Activated naive CD4-positive, alpha-beta T cell treated with anti-CD3 and anti-CD28 coated beads for 36 hours (primary cell): ENCODE measurements at regions of chr15 and their contacts with region 1.

Region 1: DNA sequence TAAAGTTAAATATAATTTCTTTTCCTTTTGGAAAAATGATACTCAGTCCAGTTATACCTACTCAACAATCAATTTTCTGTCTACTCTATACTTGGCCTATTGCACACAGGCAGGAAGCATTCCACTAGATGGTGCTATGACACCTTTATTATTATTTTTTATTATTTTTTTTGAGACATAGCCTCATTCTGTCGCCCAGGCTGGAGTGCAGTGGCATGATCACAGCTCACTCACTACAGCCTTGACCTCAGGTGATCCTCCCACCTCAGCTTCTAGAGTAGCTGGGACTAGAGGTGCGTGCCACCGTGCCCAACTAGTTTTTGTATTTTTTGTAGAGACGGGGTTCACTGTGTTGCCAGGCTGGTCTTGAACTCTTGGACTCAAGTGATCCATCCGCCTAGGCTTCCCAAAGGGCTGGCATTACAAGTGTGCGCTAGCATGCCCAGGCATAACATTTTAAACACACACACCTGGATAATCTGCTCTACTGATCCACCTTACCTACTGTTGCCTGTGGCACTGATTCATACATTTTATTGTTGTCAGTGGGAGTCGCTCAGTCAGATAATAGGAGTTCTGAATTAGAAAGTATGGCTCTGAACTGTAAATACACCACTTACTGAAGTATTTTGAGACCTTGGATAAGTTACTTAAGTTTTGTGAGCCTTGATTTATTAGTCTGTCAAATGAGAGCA is 56.2 kb downstream of the EIF3J start:
- DNase-seq: peak; percentile 31
- H3K4me3 Mint-ChIP-seq: no peak overlapping the region
- H3K27ac Mint-ChIP-seq: no peak overlapping the region
- H3K4me1 Mint-ChIP-seq: peaks cover 22% of the 10 kb centered on the region
- H3K27me3 Mint-ChIP-seq: no peaks in the 10 kb centered on the region

Region 2: DNA sequence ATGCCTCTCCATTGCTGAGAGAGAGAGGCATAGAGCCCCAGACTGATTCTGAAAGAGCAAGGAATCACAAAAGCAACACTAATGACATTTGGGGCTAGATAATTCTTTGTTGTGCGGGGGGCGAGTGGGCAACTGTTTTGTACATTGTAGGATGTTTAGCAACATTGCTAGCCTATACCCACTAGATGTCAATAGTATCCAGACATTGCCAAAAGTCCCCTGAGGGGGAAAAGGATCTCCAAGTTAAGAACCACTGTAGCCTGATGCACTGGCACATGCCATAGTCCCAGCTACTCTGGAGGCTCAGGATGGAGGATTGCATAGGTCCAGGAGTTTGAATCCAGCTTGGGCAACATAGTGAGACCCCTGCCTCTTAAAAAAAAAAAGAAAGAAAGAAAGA is 327.4 kb before region 1 on chr15:
- CTCF ChIA-PET with region 1: no interaction called
- intact Hi-C with region 1: no loop called
- DNase-seq: no peak
- H3K4me3 Mint-ChIP-seq: no peak overlapping the region
- H3K27ac Mint-ChIP-seq: no peak overlapping the region
- H3K4me1 Mint-ChIP-seq: no peaks in the 10 kb centered on the region
- H3K27me3 Mint-ChIP-seq: no peaks in the 10 kb centered on the region

Region 3: GRCh38 chr15:44468713-44469385 is 124.3 kb before region 1 on chr15:
- CTCF ChIA-PET with region 1: no interaction called
- intact Hi-C with region 1: no loop called
- DNase-seq: no peak
- H3K4me3 Mint-ChIP-seq: no peak overlapping the region
- H3K27ac Mint-ChIP-seq: peak overlapping the region; percentile 65
- H3K4me1 Mint-ChIP-seq: peaks cover 25% of the 10 kb centered on the region
- H3K27me3 Mint-ChIP-seq: no peaks in the 10 kb centered on the region

Region 4: DNA sequence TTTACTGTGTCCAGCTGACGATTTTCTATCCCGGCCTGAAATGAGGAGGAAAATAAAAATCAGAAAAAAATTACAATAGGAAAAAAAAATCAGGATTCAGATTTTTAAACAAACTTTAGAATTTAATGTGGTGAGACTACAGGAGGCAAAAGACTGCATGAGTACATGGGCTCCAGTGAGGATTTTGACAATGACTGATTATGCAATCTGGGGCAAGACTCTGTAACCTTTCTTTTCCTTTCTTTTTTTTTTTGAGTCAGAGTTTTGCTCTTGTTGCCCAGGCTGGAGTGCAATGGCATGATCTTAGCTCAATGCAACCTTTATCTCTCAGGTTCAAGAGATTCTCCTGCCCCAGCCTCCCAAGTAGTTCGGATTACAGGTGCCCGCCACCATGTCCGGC is 40.4 kb after region 1 on chr15:
- CTCF ChIA-PET with region 1: interaction called, 6 read pairs
- intact Hi-C with region 1: loop called (anchors 1 kb)
- DNase-seq: peak; percentile 34
- H3K4me3 Mint-ChIP-seq: peak overlapping the region; percentile 65
- H3K27ac Mint-ChIP-seq: peak overlapping the region; percentile 98
- H3K4me1 Mint-ChIP-seq: peaks cover 34% of the 10 kb centered on the region
- H3K27me3 Mint-ChIP-seq: no peaks in the 10 kb centered on the region

Region 5: GRCh38 chr15:44656298-44656697 is 63.1 kb after region 1 on chr15:
- CTCF ChIA-PET with region 1: interaction called, 10 read pairs
- intact Hi-C with region 1: no loop called
- DNase-seq: no peak
- H3K4me3 Mint-ChIP-seq: no peak overlapping the region
- H3K27ac Mint-ChIP-seq: peak overlapping the region; percentile 54
- H3K4me1 Mint-ChIP-seq: peaks cover 32% of the 10 kb centered on the region
- H3K27me3 Mint-ChIP-seq: no peaks in the 10 kb centered on the region